ENCODE measurements at regions of chr10 and their contacts with region 1.

Region 1: DNA sequence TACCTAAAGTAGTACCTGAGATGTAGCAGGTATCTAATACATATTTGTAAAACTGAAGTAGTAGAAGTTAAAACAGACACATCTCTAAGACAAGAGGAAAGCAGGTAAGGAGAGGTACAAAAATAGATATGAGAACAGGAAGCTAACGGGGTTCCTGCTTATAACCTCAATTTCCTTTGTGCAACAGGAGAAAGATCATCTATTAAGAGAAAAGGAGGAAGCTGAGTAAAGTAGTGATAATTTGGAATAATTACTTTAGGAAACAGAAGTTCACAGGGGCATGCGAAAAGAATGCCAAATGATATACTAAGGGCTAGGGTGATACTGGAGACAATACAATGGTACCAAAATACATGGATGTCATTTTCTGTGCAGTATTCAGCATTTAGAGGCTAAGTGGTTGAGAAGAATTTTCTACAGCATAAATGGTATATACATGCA is 108.7 kb downstream of the NRBF2 start:
- DNase-seq: peak in 2 of 14 experiments; percentile 17 to 65
- ATAC-seq: peak; percentile 51
- H3K4me3 ChIP-seq: peak overlapping the region; percentile 22
- H3K4me3 Mint-ChIP-seq: peak overlapping the region; percentile 63
- H3K27ac ChIP-seq: peak overlapping the region in 1 of 2 donors; percentile 59
- H3K27ac Mint-ChIP-seq: peak overlapping the region; percentile 70
- H3K4me1 ChIP-seq: peaks cover 37% of the 10 kb centered on the region
- H3K4me1 Mint-ChIP-seq: peaks cover 84% of the 10 kb centered on the region
- H3K27me3 ChIP-seq: no peaks in the 10 kb centered on the region
- H3K27me3 Mint-ChIP-seq: no peaks in the 10 kb centered on the region
- CTCF ChIP-seq: no peak

Region 2: DNA sequence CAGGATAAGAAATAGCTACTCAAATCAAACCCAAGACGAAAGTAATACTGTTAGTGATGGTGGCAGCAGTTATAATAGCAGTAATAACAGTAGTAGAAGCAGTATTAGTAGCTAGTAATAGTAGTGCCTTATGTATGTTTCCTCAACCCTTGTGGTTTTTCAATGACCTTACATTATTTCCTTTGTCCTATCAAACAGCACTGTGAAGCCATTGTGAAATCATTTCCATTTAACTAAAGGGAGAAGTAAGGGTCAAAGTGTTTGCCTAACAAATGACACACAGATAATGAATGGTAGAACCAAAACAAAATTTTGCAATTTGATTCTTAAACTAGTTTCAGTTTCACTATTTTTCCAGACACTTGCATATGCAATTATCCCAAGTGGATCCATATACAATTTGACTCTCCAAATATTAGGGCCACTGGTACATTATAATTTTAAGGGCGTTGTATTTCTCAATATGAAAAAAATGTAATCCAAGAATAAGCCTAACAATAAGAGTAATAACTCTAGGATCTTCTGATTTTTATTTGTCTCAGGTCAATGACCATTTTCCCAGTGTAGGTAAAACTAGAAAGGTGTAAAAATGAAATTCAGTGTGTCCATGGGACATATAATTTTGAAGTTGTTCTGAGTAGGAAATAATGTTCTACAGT is 1755.0 kb before region 1 on chr10:
- CTCF ChIA-PET with region 1: no interaction called
- POLR2A ChIA-PET with region 1: no interaction called
- intact Hi-C with region 1: no loop called
- DNase-seq: peak in 3 of 14 experiments; percentile 3 to 30 (median 27)
- ATAC-seq: no peak
- H3K4me3 ChIP-seq: no peak overlapping the region
- H3K4me3 Mint-ChIP-seq: no peak overlapping the region
- H3K27ac ChIP-seq: no peak overlapping the region
- H3K27ac Mint-ChIP-seq: no peak overlapping the region
- H3K4me1 ChIP-seq: no peaks in the 10 kb centered on the region
- H3K4me1 Mint-ChIP-seq: no peaks in the 10 kb centered on the region
- H3K27me3 ChIP-seq: no peaks in the 10 kb centered on the region
- H3K27me3 Mint-ChIP-seq: peaks cover 3% of the 10 kb centered on the region
- CTCF ChIP-seq: no peak

Region 3: DNA sequence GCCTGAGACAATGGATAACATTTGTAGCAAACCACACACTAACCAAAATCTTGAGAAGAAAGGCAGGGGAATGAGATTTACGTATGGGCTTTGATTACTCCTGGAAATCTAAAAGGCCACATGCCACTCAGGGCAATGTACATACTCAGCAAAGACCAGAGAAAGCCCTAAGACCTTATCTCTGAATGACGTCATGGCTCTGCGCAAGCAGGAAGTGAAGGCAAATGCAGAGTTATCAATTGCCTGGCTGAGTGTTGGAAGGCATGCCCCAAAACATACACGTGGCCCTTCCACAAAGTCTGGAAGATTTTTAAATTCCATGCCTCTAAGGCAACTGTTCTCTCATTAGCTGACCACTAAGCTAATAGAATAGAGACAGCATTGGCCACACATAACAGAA is 199.6 kb before region 1 on chr10:
- CTCF ChIA-PET with region 1: no interaction called
- POLR2A ChIA-PET with region 1: no interaction called
- intact Hi-C with region 1: no loop called
- DNase-seq: no peak
- ATAC-seq: no peak
- H3K4me3 ChIP-seq: no peak overlapping the region
- H3K4me3 Mint-ChIP-seq: no peak overlapping the region
- H3K27ac ChIP-seq: no peak overlapping the region
- H3K27ac Mint-ChIP-seq: no peak overlapping the region
- H3K4me1 ChIP-seq: no peaks in the 10 kb centered on the region
- H3K4me1 Mint-ChIP-seq: no peaks in the 10 kb centered on the region
- H3K27me3 ChIP-seq: peaks cover 4 to 16% of the 10 kb centered on the region in 2 experiments
- H3K27me3 Mint-ChIP-seq: peaks cover 55% of the 10 kb centered on the region
- CTCF ChIP-seq: no peak

Region 4: DNA sequence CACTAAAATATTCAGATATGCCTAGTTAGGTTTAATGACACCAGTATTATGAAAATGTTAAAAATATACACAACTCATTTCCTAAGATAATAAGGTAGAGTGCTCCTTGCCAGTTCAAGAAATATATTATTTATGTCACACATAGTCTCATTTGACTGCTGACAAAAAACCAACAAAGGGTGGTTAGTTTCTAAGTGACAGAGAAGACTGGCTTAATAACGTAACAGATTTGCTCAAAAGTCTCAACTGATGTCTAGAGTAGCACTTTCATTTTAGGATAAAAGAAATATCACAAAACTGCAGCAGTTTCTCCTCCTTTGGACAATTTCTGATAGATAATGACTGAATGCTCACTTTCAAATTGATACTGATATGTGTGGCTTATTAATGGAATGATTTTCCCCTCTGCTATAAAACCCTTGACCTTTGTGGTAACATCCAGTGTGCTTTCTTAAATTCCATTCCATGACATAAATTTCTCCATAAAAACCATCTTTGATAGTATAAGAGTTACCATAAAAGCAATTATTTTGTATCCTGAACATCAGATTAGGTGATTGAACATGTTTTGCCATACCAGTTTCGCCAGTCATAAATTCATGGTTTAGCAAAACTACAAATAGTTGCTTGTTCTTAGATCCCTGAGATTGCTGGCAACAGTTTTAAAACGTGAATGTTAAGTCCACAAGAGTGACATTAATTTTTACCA is 14.5 kb before region 1 on chr10:
- CTCF ChIA-PET with region 1: interaction called, 3 read pairs
- POLR2A ChIA-PET with region 1: interaction called, 5 read pairs
- intact Hi-C with region 1: loop called in 1 of 2 experiments (anchors 2 kb)
- DNase-seq: peak in 3 of 14 experiments; percentile 42 to 51 (median 43)
- ATAC-seq: peak; percentile 19
- H3K4me3 ChIP-seq: no peak overlapping the region
- H3K4me3 Mint-ChIP-seq: peak overlapping the region; percentile 40
- H3K27ac ChIP-seq: peak overlapping the region in 1 of 2 donors; percentile 41
- H3K27ac Mint-ChIP-seq: peak overlapping the region; percentile 84
- H3K4me1 ChIP-seq: peaks cover 24% of the 10 kb centered on the region
- H3K4me1 Mint-ChIP-seq: peaks cover 81% of the 10 kb centered on the region
- H3K27me3 ChIP-seq: no peaks in the 10 kb centered on the region
- H3K27me3 Mint-ChIP-seq: no peaks in the 10 kb centered on the region
- CTCF ChIP-seq: no peak

Region 5: GRCh38 chr10:63256009-63256773 is 14.3 kb after region 1 on chr10:
- CTCF ChIA-PET with region 1: interaction called, 4 read pairs
- POLR2A ChIA-PET with region 1: interaction called, 5 read pairs
- intact Hi-C with region 1: loop called in 1 of 2 experiments (anchors 2 kb)
- DNase-seq: no peak
- ATAC-seq: no peak
- H3K4me3 ChIP-seq: no peak overlapping the region
- H3K4me3 Mint-ChIP-seq: peak overlapping the region; percentile 31
- H3K27ac ChIP-seq: no peak overlapping the region
- H3K27ac Mint-ChIP-seq: no peak overlapping the region
- H3K4me1 ChIP-seq: peaks cover 28% of the 10 kb centered on the region
- H3K4me1 Mint-ChIP-seq: peaks cover 96% of the 10 kb centered on the region
- H3K27me3 ChIP-seq: no peaks in the 10 kb centered on the region
- H3K27me3 Mint-ChIP-seq: no peaks in the 10 kb centered on the region
- CTCF ChIP-seq: no peak

Measured in CD4-positive, alpha-beta T cell (primary cell).